ENCODE measurements at regions of chr17 and their contacts with region 1.

Region 1: GRCh38 chr17:39863918-39864746 is at the start of gene IKZF3:
- DNase-seq: peak; percentile 100
- H3K4me3 Mint-ChIP-seq: peak within 1 kb of the TSS; percentile 67
- H3K27ac Mint-ChIP-seq: peak within 1 kb of the TSS; percentile 31
- H3K4me1 Mint-ChIP-seq: peaks cover 38% of the 10 kb centered on the region
- H3K27me3 Mint-ChIP-seq: peaks cover 53% of the 10 kb centered on the region
- CTCF ChIP-seq: no peak
- total RNA-seq, gene IKZF3: 30.9 and 41.0 TPM in 2 replicates

Region 2: GRCh38 chr17:39653662-39654331 is 210.3 kb before region 1 on chr17:
- CTCF ChIA-PET with region 1: interaction called, 87 read pairs
- intact Hi-C with region 1: no loop called
- DNase-seq: peak; percentile 100
- H3K4me3 Mint-ChIP-seq: no peak overlapping the region
- H3K27ac Mint-ChIP-seq: no peak overlapping the region
- H3K4me1 Mint-ChIP-seq: peaks cover 23% of the 10 kb centered on the region
- H3K27me3 Mint-ChIP-seq: no peaks in the 10 kb centered on the region
- CTCF ChIP-seq: no peak

Region 3: DNA sequence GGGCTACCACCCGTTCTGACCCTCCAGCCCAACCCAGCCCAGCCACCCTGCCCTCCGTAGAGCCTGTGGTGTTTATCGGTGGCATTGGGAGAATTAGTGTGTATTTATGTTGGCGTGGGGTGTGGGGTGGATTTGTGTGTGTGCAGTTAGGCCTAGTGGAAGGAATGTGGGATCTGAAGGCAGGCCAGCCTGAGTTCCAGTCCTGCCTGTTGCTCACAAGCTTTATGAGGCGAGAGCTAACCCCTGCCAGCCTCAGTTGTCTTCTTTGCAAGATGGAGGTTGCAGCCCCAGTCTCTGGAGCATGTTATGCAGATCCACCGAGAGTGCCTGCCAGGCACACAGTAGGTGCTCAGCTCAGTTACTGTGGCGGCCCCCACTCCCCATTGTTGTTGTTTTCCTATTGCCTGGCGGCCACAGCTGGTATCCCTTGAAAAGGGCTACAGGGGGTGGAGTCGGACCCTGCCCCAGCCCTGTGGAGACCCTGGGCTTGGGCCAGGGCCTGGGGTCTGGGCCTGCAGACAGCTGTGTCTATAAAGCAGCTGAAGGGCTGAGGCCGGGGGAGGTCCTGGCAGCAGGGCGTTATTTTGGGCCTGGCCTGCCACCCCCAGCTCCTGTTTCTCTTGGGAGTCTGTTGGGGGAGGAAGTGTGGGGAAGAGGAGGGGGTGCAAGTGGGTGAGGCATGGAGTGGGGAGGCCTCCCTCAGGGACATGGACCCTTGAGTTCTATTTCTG is 159.1 kb before region 1 on chr17:
- CTCF ChIA-PET with region 1: interaction called, 69 read pairs
- intact Hi-C with region 1: loop called (anchors 1 kb)
- DNase-seq: peak; percentile 99
- H3K4me3 Mint-ChIP-seq: peak overlapping the region; percentile 71
- H3K27ac Mint-ChIP-seq: peak overlapping the region; percentile 67
- H3K4me1 Mint-ChIP-seq: peaks cover 92% of the 10 kb centered on the region
- H3K27me3 Mint-ChIP-seq: no peaks in the 10 kb centered on the region
- CTCF ChIP-seq: no peak

Region 4: GRCh38 chr17:39769974-39770587 is 94.1 kb before region 1 on chr17:
- CTCF ChIA-PET with region 1: interaction called, 375 read pairs
- intact Hi-C with region 1: loop called (anchors 1 kb)
- DNase-seq: peak; percentile 100
- H3K4me3 Mint-ChIP-seq: peak overlapping the region; percentile 10
- H3K27ac Mint-ChIP-seq: peak overlapping the region; percentile 60
- H3K4me1 Mint-ChIP-seq: peaks cover 72% of the 10 kb centered on the region
- H3K27me3 Mint-ChIP-seq: peaks cover 13% of the 10 kb centered on the region
- CTCF ChIP-seq: no peak

Region 5: DNA sequence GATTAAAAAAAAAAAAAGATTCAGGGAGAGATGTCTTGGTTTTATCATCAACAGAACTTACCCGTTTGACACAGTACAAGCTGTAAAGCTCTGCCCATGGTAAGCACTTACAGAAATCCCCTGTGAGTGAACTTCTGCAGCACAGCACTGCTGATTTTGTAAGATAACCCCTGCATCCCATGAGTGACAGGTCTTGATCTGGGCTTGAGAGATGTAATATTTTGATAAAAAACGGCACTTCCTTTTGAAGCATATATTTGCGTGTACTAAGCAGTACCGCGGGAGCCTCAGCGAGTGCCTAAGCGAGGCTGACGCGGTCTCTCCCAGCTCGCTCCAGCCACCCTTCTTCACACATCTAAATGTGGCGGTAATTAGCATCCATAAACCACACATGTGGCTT is 50.5 kb before region 1 on chr17:
- CTCF ChIA-PET with region 1: interaction called, 130 read pairs
- intact Hi-C with region 1: no loop called
- DNase-seq: peak; percentile 64
- H3K4me3 Mint-ChIP-seq: no peak overlapping the region
- H3K27ac Mint-ChIP-seq: no peak overlapping the region
- H3K4me1 Mint-ChIP-seq: peaks cover 19% of the 10 kb centered on the region
- H3K27me3 Mint-ChIP-seq: no peaks in the 10 kb centered on the region
- CTCF ChIP-seq: no peak

Region 6: GRCh38 chr17:39852239-39852638 is 11.9 kb before region 1 on chr17:
- CTCF ChIA-PET with region 1: interaction called, 498 read pairs
- intact Hi-C with region 1: no loop called
- DNase-seq: peak; percentile 59
- H3K4me3 Mint-ChIP-seq: no peak overlapping the region
- H3K27ac Mint-ChIP-seq: no peak overlapping the region
- H3K4me1 Mint-ChIP-seq: peaks cover 10% of the 10 kb centered on the region
- H3K27me3 Mint-ChIP-seq: no peaks in the 10 kb centered on the region
- CTCF ChIP-seq: no peak

Region 7: GRCh38 chr17:39952680-39953470 is 88.7 kb after region 1 on chr17:
- CTCF ChIA-PET with region 1: interaction called, 184 read pairs
- intact Hi-C with region 1: no loop called
- DNase-seq: peak; percentile 100
- H3K4me3 Mint-ChIP-seq: peak overlapping the region; percentile 58
- H3K27ac Mint-ChIP-seq: peak overlapping the region; percentile 18
- H3K4me1 Mint-ChIP-seq: peaks cover 42% of the 10 kb centered on the region
- H3K27me3 Mint-ChIP-seq: peaks cover 15% of the 10 kb centered on the region
- CTCF ChIP-seq: no peak

Region 8: DNA sequence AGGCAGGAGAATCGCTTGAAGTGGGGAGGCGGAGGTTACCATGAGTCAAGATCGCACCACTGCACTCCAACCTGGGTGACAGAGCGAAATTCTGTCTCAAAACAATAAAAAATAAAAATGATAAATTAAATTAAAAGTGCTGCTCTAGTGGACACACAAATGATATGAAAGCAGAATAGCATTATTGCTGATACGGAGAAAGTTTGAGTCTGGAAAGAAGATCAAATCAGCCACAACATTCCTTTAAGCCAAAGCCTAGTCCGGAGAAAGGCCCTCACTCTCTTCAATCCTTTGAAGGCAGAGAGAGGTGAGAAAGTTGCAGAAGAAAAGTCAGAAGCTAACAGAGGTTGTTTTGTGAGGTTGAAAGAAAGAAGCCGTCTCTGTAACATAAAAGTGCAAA is 136.0 kb after region 1 on chr17:
- CTCF ChIA-PET with region 1: no interaction called
- intact Hi-C with region 1: no loop called
- DNase-seq: no peak
- H3K4me3 Mint-ChIP-seq: no peak overlapping the region
- H3K27ac Mint-ChIP-seq: no peak overlapping the region
- H3K4me1 Mint-ChIP-seq: no peaks in the 10 kb centered on the region
- H3K27me3 Mint-ChIP-seq: peaks cover 13% of the 10 kb centered on the region
- CTCF ChIP-seq: no peak